ENCODE measurements at regions of chr14 and their contacts with region 1.

Region 1: GRCh38 chr14:99683619-99684355 is at the start of gene CYP46A1:
- DNase-seq: peak; percentile 98 to 100
- H3K4me3 ChIP-seq: peak within 1 kb of the TSS; percentile 92 to 96
- H3K27ac ChIP-seq: peak within 1 kb of the TSS; percentile 92 to 97
- H3K4me1 ChIP-seq: peaks cover 0 to 5% of the 10 kb centered on the region in 2 donors
- H3K27me3 ChIP-seq: no peaks in the 10 kb centered on the region
- CTCF ChIP-seq: no peak
- total RNA-seq, gene CYP46A1: not detected

Region 2: GRCh38 chr14:99604283-99604765 is 79.5 kb before region 1 on chr14:
- intact Hi-C with region 1: loop called (anchors 1 kb)
- DNase-seq: peak; percentile 81 to 96
- H3K4me3 ChIP-seq: peak overlapping the region; percentile 78 to 81
- H3K27ac ChIP-seq: peak overlapping the region; percentile 77 to 81
- H3K4me1 ChIP-seq: peaks cover 4 to 8% of the 10 kb centered on the region in 2 donors
- H3K27me3 ChIP-seq: no peaks in the 10 kb centered on the region
- CTCF ChIP-seq: no peak

Region 3: DNA sequence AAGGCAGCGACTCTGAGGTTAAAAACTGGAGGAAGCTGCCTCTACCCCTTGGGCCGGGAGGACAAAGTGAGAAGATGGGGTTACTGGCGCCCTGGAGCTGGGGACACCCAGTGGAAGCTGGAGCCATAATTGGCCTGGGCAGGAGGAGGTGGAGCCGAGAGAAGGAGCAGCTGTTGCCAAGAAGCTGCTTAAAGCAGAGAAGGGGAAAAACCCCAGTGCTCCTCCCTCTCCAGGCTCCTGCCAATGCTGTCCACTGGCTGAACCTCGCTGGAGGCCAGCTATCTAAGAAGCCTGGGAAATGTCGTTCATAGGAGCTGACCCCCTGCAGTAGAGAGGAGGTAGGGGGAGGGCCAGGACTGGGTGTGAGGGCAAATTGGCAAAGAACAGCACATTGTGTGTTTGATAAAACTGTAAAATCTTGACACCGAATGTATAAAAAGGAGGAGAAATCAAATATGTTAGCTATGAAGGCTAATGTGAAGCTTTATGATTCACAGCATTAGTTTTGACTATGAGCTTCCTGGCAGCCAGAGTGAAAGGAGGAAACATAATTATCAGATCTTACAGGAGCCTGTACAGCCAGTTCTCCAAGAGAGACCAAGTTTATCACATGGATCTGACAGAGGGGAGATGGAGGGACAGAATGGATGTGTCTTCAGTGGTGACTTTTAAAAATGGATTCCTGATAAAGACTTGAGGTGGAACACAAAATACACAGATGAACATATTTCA is 29.4 kb before region 1 on chr14:
- intact Hi-C with region 1: no loop called
- DNase-seq: no peak
- H3K4me3 ChIP-seq: no peak overlapping the region
- H3K27ac ChIP-seq: no peak overlapping the region
- H3K4me1 ChIP-seq: no peaks in the 10 kb centered on the region
- H3K27me3 ChIP-seq: no peaks in the 10 kb centered on the region
- CTCF ChIP-seq: no peak

Region 4: DNA sequence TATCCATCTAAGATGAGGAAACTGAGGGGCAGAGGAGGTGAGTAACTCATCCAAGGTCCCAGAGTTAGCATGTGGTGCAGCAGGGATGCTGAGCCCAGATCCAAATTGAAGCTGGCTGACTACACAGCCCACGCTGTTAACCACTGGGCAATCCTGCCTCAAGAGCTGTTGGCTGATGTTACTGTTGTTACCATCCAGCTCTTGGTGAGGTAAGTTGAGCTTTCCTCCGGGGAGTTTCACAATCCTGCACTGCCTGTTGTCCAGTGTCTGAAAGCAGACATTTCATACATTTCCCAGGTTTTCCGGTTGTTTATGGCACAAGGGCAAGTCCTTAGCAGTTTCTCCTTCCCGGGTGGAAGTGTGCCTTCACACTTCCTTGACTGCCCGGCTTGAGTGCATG is 14.9 kb after region 1 on chr14:
- intact Hi-C with region 1: no loop called
- DNase-seq: no peak
- H3K4me3 ChIP-seq: no peak overlapping the region
- H3K27ac ChIP-seq: no peak overlapping the region
- H3K4me1 ChIP-seq: no peaks in the 10 kb centered on the region
- H3K27me3 ChIP-seq: no peaks in the 10 kb centered on the region
- CTCF ChIP-seq: no peak

Region 5: GRCh38 chr14:99768381-99768780 is 84.6 kb after region 1 on chr14:
- intact Hi-C with region 1: no loop called
- DNase-seq: no peak
- H3K4me3 ChIP-seq: no peak overlapping the region
- H3K27ac ChIP-seq: peak overlapping the region; percentile 89 to 95
- H3K4me1 ChIP-seq: peaks cover 10 to 16% of the 10 kb centered on the region in 2 donors
- H3K27me3 ChIP-seq: no peaks in the 10 kb centered on the region
- CTCF ChIP-seq: no peak

Region 6: GRCh38 chr14:99793213-99794150 is 109.7 kb after region 1 on chr14 and contains the start of gene EML1:
- intact Hi-C with region 1: loop called (anchors 2 kb)
- DNase-seq: peak in 1 of 2 donors; percentile 89
- H3K4me3 ChIP-seq: peak within 1 kb of the TSS; percentile 73 to 84
- H3K27ac ChIP-seq: peak within 1 kb of the TSS; percentile 88 to 96
- H3K4me1 ChIP-seq: peaks cover 0 to 6% of the 10 kb centered on the region in 2 donors
- H3K27me3 ChIP-seq: no peaks in the 10 kb centered on the region
- CTCF ChIP-seq: no peak
- total RNA-seq, gene EML1: 28.3 TPM

Region 7: DNA sequence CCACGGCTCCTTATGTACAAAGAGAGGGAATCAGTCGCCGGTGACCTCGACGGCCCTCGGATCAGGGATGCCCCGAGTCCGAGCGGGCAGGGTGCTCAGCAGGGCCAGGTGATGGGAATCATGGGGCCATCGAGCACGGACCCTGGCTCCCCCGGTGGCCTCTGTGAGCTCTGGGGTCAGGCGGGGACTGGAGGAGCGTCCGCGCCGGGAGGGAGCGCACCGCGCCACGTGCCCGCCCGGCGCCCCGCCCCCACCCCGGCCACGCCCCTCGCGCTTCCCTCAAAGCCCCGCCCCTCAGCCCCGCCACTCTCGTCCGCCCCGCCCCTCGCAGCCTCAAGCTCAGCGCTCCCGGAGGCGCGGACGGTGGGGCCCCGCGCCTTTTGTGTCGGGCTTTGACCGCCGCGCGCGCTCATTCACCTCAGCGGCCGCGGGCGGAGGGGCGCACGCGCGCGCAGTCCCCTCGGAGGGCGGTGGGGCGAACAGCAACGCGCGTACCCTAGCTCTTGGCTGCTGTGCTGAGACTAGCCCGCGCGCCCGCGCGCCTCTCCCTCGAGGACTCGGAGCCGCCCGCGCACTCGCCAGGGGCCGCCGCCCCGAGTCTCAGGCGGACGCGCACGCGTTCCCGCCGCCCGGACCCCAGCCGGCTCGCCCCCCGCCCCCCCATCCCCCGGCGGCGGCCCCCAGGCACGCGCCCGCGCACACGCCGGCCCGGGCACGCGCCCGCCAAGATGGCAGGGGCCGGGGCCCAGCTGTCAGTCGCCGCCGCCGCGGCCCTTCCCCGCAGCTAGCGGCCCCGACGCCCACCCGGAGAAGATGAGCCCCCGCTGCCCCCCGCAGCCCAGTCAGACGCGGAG is 287.5 kb after region 1 on chr14:
- intact Hi-C with region 1: loop called (anchors 5 kb)
- DNase-seq: peak in 1 of 2 donors; percentile 80
- H3K4me3 ChIP-seq: peak overlapping the region; percentile 71 to 96
- H3K27ac ChIP-seq: peak overlapping the region in 1 of 2 donors; percentile 67
- H3K4me1 ChIP-seq: no peaks in the 10 kb centered on the region
- H3K27me3 ChIP-seq: no peaks in the 10 kb centered on the region
- CTCF ChIP-seq: no peak

Region 8: GRCh38 chr14:100239840-100240724 is 556.3 kb after region 1 on chr14:
- intact Hi-C with region 1: loop called (anchors 2 kb)
- DNase-seq: peak; percentile 65 to 94
- H3K4me3 ChIP-seq: peak overlapping the region; percentile 83 to 100
- H3K27ac ChIP-seq: peak overlapping the region; percentile 91 to 93
- H3K4me1 ChIP-seq: peaks cover 9 to 32% of the 10 kb centered on the region in 2 donors
- H3K27me3 ChIP-seq: no peaks in the 10 kb centered on the region
- CTCF ChIP-seq: peak; percentile 51 to 79 (median 65)

Measured in ascending aorta (tissue), 2 donors.